OCI-LY7 (cell line): ENCODE measurements at regions of chr2 and their contacts with region 1.

Region 1: GRCh38 chr2:203689426-203690116 is 16.9 kb upstream of the CD28 start:
- DNase-seq: peak; percentile 67
- H3K4me3 ChIP-seq: peak overlapping the region; percentile 61
- H3K27ac ChIP-seq: peak overlapping the region; percentile 93
- H3K4me1 ChIP-seq: peaks cover 82% of the 10 kb centered on the region
- CTCF ChIP-seq: no peak

Region 2: DNA sequence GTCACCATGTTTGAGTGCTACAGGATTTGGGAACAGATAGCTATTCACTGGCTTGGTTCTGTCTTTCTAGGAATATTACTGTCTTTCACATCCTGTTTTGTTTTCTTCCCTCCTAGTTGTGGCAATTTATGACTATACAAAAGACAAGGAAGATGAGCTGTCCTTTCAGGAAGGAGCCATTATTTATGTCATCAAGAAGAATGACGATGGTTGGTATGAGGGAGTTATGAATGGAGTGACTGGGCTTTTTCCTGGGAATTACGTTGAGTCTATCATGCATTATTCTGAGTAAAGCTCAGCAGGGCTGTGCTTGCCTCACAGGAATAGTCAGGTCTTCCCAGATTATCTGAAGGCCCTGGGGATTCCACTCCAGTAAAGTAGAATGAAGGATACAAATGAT is 262.5 kb before region 1 on chr2:
- CTCF ChIA-PET with region 1: no interaction called
- POLR2A ChIA-PET with region 1: interaction called, 10 read pairs
- intact Hi-C with region 1: no loop called
- DNase-seq: no peak
- H3K4me3 ChIP-seq: no peak overlapping the region
- H3K27ac ChIP-seq: no peak overlapping the region
- H3K4me1 ChIP-seq: peaks cover 16% of the 10 kb centered on the region
- CTCF ChIP-seq: no peak

Region 3: GRCh38 chr2:203562268-203562667 is 127.3 kb before region 1 on chr2:
- CTCF ChIA-PET with region 1: no interaction called
- POLR2A ChIA-PET with region 1: no interaction called
- intact Hi-C with region 1: no loop called
- DNase-seq: no peak
- H3K4me3 ChIP-seq: no peak overlapping the region
- H3K27ac ChIP-seq: no peak overlapping the region
- H3K4me1 ChIP-seq: peaks cover 4% of the 10 kb centered on the region
- CTCF ChIP-seq: no peak